AG04449 (cell line): ENCODE measurements at regions of chr18 and their contacts with region 1.

Region 1: GRCh38 chr18:712401-713134 is at the start of gene ENOSF1:
- DNase-seq: no peak
- H3K4me3 ChIP-seq: peak within 1 kb of the TSS; percentile 73
- CTCF ChIP-seq: peak; percentile 65

Region 2: DNA sequence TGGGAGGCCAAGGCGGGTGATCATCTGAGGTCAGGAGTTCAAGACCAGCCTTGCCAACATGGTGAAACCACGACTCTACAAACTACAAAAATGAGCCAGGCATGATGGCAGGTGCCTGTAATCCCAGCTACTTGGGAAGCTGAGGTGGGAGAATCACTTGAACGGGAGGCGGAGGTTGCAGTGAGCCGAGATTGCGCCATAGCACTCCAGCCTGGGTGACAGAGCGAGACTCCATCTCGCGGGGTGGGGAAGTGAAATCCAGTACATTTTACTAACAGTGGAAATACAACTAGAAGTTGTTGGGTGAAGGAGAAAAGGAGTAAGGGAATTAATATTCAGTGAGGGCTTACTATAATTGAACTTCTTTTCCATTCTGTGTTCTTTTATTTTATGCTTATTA is 13.1 kb after region 1 on chr18:
- CTCF ChIA-PET with region 1: interaction called, 18 read pairs
- POLR2A ChIA-PET with region 1: no interaction called
- DNase-seq: no peak
- H3K4me3 ChIP-seq: no peak overlapping the region
- CTCF ChIP-seq: no peak